Cardiac septum (tissue), 1 donor: ENCODE measurements at regions of chr1 and their contacts with region 1.

Region 1: DNA sequence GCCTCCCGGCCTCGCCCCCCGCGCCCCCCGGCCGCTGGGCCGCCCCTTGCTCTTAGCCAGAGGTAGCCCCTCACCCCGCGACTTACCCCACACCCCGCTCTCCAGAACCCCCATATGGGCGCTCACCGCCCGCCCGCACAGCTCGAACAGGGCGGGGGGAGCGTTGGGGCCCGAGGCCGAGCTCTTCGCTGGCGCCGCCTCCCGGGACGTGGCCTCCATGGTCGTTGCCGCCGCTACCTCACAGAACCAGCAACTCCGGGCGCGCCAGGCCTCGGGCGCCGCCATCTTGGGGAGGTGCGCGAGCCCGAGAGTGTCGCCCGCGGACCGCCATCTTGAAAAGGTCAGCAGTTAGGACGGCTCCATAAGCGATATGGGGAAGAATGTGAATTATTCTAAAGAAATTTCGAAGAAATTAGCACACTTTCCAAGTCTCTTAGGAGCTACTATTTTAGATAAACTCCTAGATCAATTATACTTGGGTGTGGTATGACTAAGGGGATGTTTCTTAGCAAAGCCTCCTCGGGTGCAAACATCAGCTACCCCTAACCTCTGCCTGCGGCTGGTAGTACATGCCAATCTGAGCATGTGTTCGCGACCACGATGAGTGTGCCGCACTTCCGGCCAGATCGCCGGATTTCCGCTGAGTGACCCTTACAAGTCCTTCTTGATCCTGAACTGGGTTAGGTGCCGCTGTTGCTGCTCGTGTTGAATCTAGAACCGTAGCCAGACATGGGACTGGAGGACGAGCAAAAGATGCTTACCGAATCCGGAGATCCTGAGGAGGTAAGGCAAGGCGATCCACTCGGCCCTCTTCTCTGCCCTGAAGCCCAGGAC is at the starts of genes LRRC41 and UQCRH:
- DNase-seq: peak; percentile 96
- total RNA-seq, gene LRRC41: 52.5 TPM
- total RNA-seq, gene UQCRH: 907 TPM

Region 2: DNA sequence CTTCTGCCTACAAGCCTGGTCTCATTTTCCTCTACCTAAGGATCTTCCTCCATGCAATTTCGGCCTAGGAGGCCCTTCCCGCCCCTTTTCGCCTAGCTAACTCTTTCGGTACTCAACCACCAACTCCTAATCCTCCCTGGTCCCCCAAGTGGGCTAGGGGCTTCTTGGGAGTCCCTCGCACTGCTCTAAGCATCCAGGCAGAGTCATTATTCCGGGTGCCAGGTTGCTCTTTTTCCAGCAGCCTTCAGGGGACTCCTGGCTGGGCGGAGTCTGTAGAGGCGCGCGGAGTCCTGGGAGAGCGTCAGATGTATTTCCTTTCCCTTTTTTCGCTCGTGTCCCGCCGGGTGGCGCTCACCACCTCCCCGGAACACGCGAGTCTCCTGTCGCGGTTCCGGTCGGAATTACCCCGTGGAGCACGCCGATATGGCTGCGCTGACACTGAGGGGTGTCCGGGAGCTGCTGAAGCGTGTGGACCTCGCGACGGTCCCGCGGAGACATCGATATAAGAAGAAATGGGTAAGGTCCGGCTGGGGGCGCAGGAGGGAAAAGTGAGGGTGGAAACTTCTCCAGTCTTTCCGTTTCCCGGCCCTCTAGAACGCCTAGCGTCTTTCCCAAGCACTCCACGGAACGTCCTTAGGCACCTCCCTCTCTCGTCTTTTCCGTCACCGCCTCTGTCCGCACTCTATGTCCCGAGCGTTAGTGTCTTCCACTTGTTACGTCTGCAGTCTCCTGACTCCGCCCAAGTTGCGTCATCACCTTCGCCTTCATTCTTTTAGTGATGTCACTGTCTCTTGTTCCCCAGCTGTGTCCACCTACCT is 37.4 kb after region 1 on chr1 and contains the start of gene NSUN4:
- intact Hi-C with region 1: loop called (anchors 1 kb)
- DNase-seq: peak; percentile 95
- total RNA-seq, gene NSUN4: 18.5 TPM